HCT116 (cell line): ENCODE measurements at regions of chr12 and their contacts with region 1.

Region 1: GRCh38 chr12:57005980-57006808 is at the start of gene ZBTB39:
- DNase-seq: peak; percentile 16
- ATAC-seq: peak; percentile 87
- H3K4me3 ChIP-seq: peak within 1 kb of the TSS; percentile 82 to 96
- H3K27ac ChIP-seq: peak within 1 kb of the TSS; percentile 50
- H3K4me1 ChIP-seq: peaks cover 4 to 30% of the 10 kb centered on the region in 2 experiments
- H3K27me3 ChIP-seq: no peaks in the 10 kb centered on the region
- CTCF ChIP-seq: peak; percentile 47 to 85 (median 60)
- POLR2A ChIP-seq: peak; percentile 37
- RAD21 ChIP-seq: no peak
- total RNA-seq, gene ZBTB39: 12.3 TPM

Region 2: GRCh38 chr12:56758728-56759262 is 247.4 kb before region 1 on chr12:
- CTCF ChIA-PET with region 1: interaction called, 11 read pairs
- POLR2A ChIA-PET with region 1: no interaction called
- RAD21 ChIA-PET with region 1: interaction called in 1 of 2 experiments, 4 read pairs
- intact Hi-C with region 1: loop called (anchors 5 kb)
- DNase-seq: no peak
- ATAC-seq: no peak
- H3K4me3 ChIP-seq: no peak overlapping the region
- H3K27ac ChIP-seq: no peak overlapping the region
- H3K4me1 ChIP-seq: no peaks in the 10 kb centered on the region
- H3K27me3 ChIP-seq: no peaks in the 10 kb centered on the region
- CTCF ChIP-seq: no peak
- POLR2A ChIP-seq: no peak
- RAD21 ChIP-seq: no peak

Region 3: GRCh38 chr12:56839915-56840325 is 166.3 kb before region 1 on chr12:
- CTCF ChIA-PET with region 1: interaction called, 31 read pairs
- POLR2A ChIA-PET with region 1: no interaction called
- RAD21 ChIA-PET with region 1: interaction called in 1 of 2 experiments, 3 read pairs
- intact Hi-C with region 1: loop called (anchors 1 kb)
- DNase-seq: peak; percentile 48
- ATAC-seq: peak; percentile 87
- H3K4me3 ChIP-seq: no peak overlapping the region
- H3K27ac ChIP-seq: no peak overlapping the region
- H3K4me1 ChIP-seq: peaks cover 0 to 13% of the 10 kb centered on the region in 2 experiments; a peak in 1 of 4 replicates
- H3K27me3 ChIP-seq: no peaks in the 10 kb centered on the region
- CTCF ChIP-seq: peak; percentile 79 to 91 (median 82)
- POLR2A ChIP-seq: no peak
- RAD21 ChIP-seq: peak; percentile 94

Region 4: DNA sequence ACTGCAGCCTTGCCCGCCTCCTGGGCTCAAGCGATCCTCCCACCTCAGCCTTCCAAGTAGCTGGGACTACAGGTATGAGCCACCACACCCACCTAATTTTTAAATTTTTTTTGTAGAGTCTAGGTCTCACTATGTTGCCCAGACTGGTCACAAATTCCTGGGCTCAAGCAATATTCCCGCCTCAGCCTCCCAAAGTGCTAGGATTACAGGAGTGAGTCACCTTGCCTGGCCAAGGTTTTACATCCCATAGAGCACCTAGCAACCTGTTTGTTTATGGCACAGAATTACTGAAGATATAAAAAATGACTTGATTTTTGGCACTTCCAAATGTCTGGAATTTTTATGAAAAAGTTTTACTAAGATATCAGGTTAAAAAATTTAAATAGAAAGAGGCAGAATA is 27.2 kb after region 1 on chr12:
- CTCF ChIA-PET with region 1: no interaction called
- POLR2A ChIA-PET with region 1: no interaction called
- RAD21 ChIA-PET with region 1: no interaction called
- intact Hi-C with region 1: no loop called
- DNase-seq: no peak
- ATAC-seq: no peak
- H3K4me3 ChIP-seq: no peak overlapping the region
- H3K27ac ChIP-seq: no peak overlapping the region
- H3K4me1 ChIP-seq: peaks cover 12 to 17% of the 10 kb centered on the region in 2 experiments
- H3K27me3 ChIP-seq: no peaks in the 10 kb centered on the region
- CTCF ChIP-seq: no peak
- POLR2A ChIP-seq: no peak
- RAD21 ChIP-seq: no peak

Region 5: GRCh38 chr12:57063991-57064685 is 57.9 kb after region 1 on chr12:
- CTCF ChIA-PET with region 1: interaction called, 16 read pairs
- POLR2A ChIA-PET with region 1: no interaction called
- RAD21 ChIA-PET with region 1: no interaction called
- intact Hi-C with region 1: loop called (anchors 1 kb)
- DNase-seq: no peak
- ATAC-seq: no peak
- H3K4me3 ChIP-seq: no peak overlapping the region
- H3K27ac ChIP-seq: no peak overlapping the region
- H3K4me1 ChIP-seq: no peaks in the 10 kb centered on the region
- H3K27me3 ChIP-seq: no peaks in the 10 kb centered on the region
- CTCF ChIP-seq: no peak
- POLR2A ChIP-seq: no peak
- RAD21 ChIP-seq: no peak

Region 6: DNA sequence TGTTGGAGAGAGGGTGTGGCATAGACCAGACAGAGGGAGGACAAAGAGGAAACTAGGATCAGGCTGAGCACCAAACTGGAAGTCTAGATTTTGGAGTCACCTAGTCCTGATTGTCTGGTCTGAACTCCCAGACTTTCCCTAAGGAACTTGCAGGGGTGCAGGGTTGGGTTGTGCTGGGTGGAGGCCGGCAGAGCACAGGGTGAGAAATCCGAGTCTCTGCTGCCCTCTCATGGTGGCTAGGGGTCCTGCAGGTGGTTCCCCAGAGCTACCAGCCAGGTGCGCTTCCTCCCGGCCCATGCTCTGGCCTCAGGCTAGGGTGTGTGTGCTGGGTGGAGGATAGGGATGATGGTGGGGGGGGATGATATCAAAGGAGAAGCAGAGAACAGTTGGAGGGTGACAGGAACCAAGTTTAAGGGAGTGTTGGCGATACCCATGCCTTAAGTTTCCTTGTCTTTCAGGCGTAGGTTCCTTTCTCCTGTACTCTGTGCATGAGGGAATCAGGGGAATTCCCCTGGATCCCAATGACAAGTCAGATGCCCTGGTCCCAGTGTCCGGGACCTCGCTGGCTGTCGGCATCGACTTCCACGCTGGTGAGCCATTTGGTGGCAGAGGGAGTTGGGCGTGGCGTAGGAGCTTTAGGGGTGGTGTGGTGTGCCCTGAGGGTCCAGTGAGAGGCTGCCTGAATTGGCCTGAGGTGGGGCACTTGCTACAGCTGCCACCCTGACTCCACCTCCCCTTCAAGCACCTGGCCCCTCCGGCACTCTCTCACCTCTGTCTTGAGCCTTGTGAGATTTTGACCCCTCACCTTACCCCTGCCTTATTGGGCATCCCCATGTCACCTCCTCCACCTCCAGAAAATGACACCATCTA is 177.0 kb after region 1 on chr12:
- CTCF ChIA-PET with region 1: no interaction called
- POLR2A ChIA-PET with region 1: no interaction called
- RAD21 ChIA-PET with region 1: no interaction called
- intact Hi-C with region 1: loop called (anchors 2 kb)
- DNase-seq: peak; percentile 31
- ATAC-seq: peak; percentile 99
- H3K4me3 ChIP-seq: no peak overlapping the region
- H3K27ac ChIP-seq: no peak overlapping the region
- H3K4me1 ChIP-seq: peaks cover 0 to 8% of the 10 kb centered on the region in 2 experiments; a peak in 3 of 4 replicates
- H3K27me3 ChIP-seq: no peaks in the 10 kb centered on the region
- CTCF ChIP-seq: peak; percentile 91 to 93 (median 93)
- POLR2A ChIP-seq: no peak
- RAD21 ChIP-seq: peak; percentile 93